SK-N-SH (cell line): ENCODE measurements at regions of chr3 and their contacts with region 1.

Region 1: GRCh38 chr3:64462203-64462602 is 225.6 kb downstream of the ADAMTS9 start:
- DNase-seq: no peak
- H3K4me3 ChIP-seq: peak overlapping the region; percentile 2 to 39; a peak in 3 of 4 replicates
- H3K27ac ChIP-seq: peak overlapping the region in 1 of 2 experiments; percentile 83; a peak in 2 of 4 replicates
- H3K4me1 ChIP-seq: peaks cover 0 to 12% of the 10 kb centered on the region in 2 experiments; a peak in 1 of 4 replicates
- H3K27me3 ChIP-seq: no peaks in the 10 kb centered on the region
- CTCF ChIP-seq: no peak
- EP300 ChIP-seq: peak in 1 of 2 experiments; percentile 68; a peak in 1 of 4 replicates
- RAD21 ChIP-seq: no peak

Region 2: DNA sequence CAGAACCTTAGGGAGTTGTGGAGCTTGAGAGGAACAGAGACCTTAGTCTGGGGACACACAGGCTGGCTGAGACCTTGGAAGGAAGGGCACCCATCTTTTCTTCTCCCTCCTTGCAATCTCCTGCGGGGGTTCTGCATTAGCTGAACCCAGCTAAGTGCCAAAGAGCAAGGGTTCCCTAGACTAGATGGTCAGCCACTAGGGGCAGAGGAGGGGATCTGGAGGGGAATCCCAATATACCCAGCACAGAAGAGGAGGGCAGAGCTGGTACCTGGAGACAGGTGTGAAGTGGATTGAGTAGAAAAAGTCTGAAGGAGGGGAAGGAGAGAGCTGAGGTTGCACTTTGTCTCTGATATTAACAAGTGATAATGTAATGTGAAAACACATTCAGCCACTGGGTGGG is 12.8 kb after region 1 on chr3:
- CTCF ChIA-PET with region 1: interaction called, 20 read pairs
- POLR2A ChIA-PET with region 1: no interaction called
- DNase-seq: no peak
- H3K4me3 ChIP-seq: no peak overlapping the region
- H3K27ac ChIP-seq: no peak overlapping the region
- H3K4me1 ChIP-seq: no peaks in the 10 kb centered on the region
- H3K27me3 ChIP-seq: no peaks in the 10 kb centered on the region
- CTCF ChIP-seq: no peak
- EP300 ChIP-seq: no peak
- RAD21 ChIP-seq: no peak